WTC11 (cell line): ENCODE measurements at regions of chr20 and their contacts with region 1.

Region 1: DNA sequence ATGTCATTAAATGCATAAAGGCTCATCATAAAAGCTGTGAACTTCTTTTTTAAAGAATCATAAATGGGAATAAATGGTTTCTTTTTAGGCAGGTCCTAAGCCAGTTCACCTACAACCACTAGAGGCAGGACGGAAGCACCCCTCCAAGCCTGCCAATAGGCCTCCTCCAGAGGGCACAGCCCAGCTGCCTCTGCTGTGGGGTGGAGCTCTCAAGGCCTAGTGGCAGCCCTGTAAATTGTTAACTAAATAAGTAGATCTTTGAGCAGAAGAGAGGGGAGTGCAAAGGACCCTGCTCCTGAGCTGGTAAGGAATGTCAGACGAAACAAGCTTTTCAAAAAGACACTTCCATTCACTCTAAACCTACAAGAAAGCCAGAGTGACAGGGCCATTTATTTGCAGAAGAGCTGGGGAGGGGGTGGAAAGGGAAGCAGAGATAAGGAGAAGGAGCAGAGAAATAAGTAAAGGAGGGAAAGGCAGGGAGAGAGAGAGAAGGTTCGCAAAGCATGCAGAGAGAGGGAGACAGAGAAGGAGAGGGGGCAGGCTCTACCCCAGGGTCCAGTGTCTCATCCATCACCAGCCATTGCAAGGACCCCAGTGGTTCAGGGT is 18.0 kb upstream of the MAFB start:
- DNase-seq: peak; percentile 70
- ATAC-seq: peak; percentile 100
- H3K4me3 Mint-ChIP-seq: no peak overlapping the region
- H3K27ac Mint-ChIP-seq: peak overlapping the region; percentile 52; the same call in 1 of the 2 replicates
- H3K4me1 Mint-ChIP-seq: peaks cover 11% of the 10 kb centered on the region
- H3K27me3 Mint-ChIP-seq: no peaks in the 10 kb centered on the region; the same call in none of the 2 replicates
- CTCF ChIP-seq: no peak

Region 2: DNA sequence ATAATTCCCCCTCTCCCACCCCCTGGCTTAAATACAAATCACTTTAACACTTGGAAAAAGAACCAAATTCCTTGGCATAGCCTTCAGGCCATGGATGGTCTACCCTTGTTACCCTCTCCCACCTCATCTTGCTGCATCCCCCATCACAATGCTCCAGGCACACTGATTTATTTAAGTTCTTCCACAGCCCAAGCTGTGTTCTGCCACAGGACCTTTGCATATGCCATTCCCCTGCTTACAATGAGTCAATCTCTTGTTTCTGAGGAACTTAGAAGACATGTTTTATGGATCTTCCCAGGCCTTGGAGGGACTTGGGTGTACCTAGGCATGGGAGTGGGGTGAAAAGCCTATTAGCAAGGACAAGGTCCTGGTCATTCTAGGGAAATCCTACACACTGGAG is 11.9 kb before region 1 on chr20:
- CTCF ChIA-PET with region 1: interaction called, 22 read pairs
- POLR2A ChIA-PET with region 1: interaction called, 3 read pairs
- DNase-seq: no peak
- ATAC-seq: no peak
- H3K4me3 Mint-ChIP-seq: no peak overlapping the region
- H3K27ac Mint-ChIP-seq: no peak overlapping the region
- H3K4me1 Mint-ChIP-seq: peaks cover 27% of the 10 kb centered on the region
- H3K27me3 Mint-ChIP-seq: peaks cover 85% of the 10 kb centered on the region
- CTCF ChIP-seq: no peak

Region 3: GRCh38 chr20:40741507-40742106 is 34.5 kb after region 1 on chr20:
- CTCF ChIA-PET with region 1: interaction called, 23 read pairs
- POLR2A ChIA-PET with region 1: no interaction called
- DNase-seq: peak; percentile 66
- ATAC-seq: peak; percentile 78
- H3K4me3 Mint-ChIP-seq: no peak overlapping the region
- H3K27ac Mint-ChIP-seq: no peak overlapping the region
- H3K4me1 Mint-ChIP-seq: peaks cover 31% of the 10 kb centered on the region
- H3K27me3 Mint-ChIP-seq: no peaks in the 10 kb centered on the region
- CTCF ChIP-seq: peak; percentile 46; the same call in 1 of the 2 replicates

Region 4: GRCh38 chr20:40938020-40938419 is 230.9 kb after region 1 on chr20:
- CTCF ChIA-PET with region 1: interaction called, 15 read pairs
- POLR2A ChIA-PET with region 1: no interaction called
- DNase-seq: peak; percentile 56
- ATAC-seq: peak; percentile 94
- H3K4me3 Mint-ChIP-seq: no peak overlapping the region
- H3K27ac Mint-ChIP-seq: no peak overlapping the region
- H3K4me1 Mint-ChIP-seq: no peaks in the 10 kb centered on the region
- H3K27me3 Mint-ChIP-seq: peaks cover 3% of the 10 kb centered on the region; the same call in 1 of the 2 replicates
- CTCF ChIP-seq: no peak